AG04450 (cell line): ENCODE measurements at regions of chr7 and their contacts with region 1.

Region 1: GRCh38 chr7:74376256-74377036 is 77.3 kb upstream of the GTF2IRD1 start:
- DNase-seq: no peak
- H3K4me3 ChIP-seq: no peak overlapping the region
- H3K27ac ChIP-seq: no peak overlapping the region
- H3K27me3 ChIP-seq: no peaks in the 10 kb centered on the region
- CTCF ChIP-seq: no peak

Region 2: GRCh38 chr7:73954181-73954580 is 422.3 kb before region 1 on chr7:
- CTCF ChIA-PET with region 1: no interaction called
- POLR2A ChIA-PET with region 1: interaction called, 11 read pairs
- DNase-seq: no peak
- H3K4me3 ChIP-seq: no peak overlapping the region
- H3K27ac ChIP-seq: peak overlapping the region; percentile 11
- H3K27me3 ChIP-seq: peaks cover 8% of the 10 kb centered on the region
- CTCF ChIP-seq: no peak

Region 3: GRCh38 chr7:74606101-74606908 is 229.9 kb after region 1 on chr7:
- CTCF ChIA-PET with region 1: no interaction called
- POLR2A ChIA-PET with region 1: no interaction called
- DNase-seq: no peak
- H3K4me3 ChIP-seq: peak overlapping the region; percentile 25; the same call in 1 of the 2 replicates
- H3K27ac ChIP-seq: no peak overlapping the region
- H3K27me3 ChIP-seq: no peaks in the 10 kb centered on the region
- CTCF ChIP-seq: no peak